ENCODE measurements at regions of chr2 and their contacts with region 1.

Region 1: DNA sequence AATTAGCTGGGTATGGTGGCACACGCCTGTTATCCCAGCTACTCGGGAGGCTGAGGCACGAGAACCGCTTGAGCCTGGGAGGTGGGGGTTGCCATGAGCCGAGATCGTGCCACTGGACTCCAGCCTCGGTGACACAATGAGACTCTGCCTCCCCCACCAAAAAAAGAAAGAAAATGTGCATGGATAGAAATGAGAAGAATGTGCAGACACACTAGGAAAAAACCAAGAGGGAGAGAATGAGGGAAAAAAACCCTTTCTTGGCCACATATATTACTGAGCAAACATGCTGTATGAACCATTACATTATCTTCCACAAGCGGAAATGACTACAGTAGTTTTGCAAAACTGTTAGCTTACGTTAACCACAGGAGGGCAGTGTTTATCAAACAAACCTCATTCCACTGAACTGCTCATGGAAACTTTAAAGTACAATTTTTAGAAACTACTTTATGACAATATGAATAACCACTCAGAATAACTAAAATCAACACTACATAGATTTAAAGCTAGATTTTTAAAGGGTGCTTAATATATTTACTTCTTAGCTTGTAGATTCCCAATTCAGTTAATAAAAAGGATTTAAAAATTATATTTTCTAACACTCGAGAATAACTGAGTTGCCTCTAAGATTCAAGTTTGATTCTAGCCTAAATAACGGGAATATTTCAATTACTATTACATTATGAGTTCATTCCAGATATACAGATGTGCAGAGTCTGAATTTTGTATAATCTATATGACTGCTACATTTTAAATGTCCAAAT is 26.4 kb downstream of the ASXL2 start:
- DNase-seq: peak; percentile 50
- ATAC-seq: peak; percentile 91
- H3K4me3 Mint-ChIP-seq: peak overlapping the region; percentile 71
- H3K27ac Mint-ChIP-seq: peak overlapping the region; percentile 90
- H3K4me1 Mint-ChIP-seq: peaks cover 39% of the 10 kb centered on the region
- H3K27me3 Mint-ChIP-seq: no peaks in the 10 kb centered on the region

Region 2: DNA sequence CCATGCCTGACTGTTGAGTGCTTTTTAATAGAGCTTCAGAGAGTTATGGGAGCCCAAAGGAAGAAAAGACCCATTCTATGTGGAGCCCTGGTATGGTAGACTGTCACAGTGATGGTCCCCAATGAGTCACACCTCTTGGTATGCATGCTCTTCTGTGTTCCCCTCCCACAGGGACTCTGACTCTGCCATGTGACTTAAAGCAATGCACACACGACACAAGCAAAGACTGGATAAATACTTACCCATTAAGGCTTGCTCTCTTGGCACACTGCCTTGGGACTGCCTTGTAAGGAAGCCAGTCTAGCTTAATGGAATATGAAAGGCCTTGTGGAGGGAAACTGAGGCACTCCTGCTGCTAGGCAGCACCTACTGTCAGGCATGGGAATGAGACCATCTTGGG is 161.9 kb before region 1 on chr2:
- CTCF ChIA-PET with region 1: no interaction called
- DNase-seq: no peak
- ATAC-seq: no peak
- H3K4me3 Mint-ChIP-seq: no peak overlapping the region
- H3K27ac Mint-ChIP-seq: no peak overlapping the region
- H3K4me1 Mint-ChIP-seq: no peaks in the 10 kb centered on the region
- H3K27me3 Mint-ChIP-seq: no peaks in the 10 kb centered on the region

Region 3: GRCh38 chr2:25838152-25838756 is 13.7 kb before region 1 on chr2:
- CTCF ChIA-PET with region 1: interaction called, 16 read pairs
- DNase-seq: no peak
- ATAC-seq: no peak
- H3K4me3 Mint-ChIP-seq: no peak overlapping the region
- H3K27ac Mint-ChIP-seq: no peak overlapping the region
- H3K4me1 Mint-ChIP-seq: peaks cover 21% of the 10 kb centered on the region
- H3K27me3 Mint-ChIP-seq: no peaks in the 10 kb centered on the region

Region 4: GRCh38 chr2:25878361-25879132 is 26.6 kb after region 1 on chr2 and contains the start of gene ASXL2:
- CTCF ChIA-PET with region 1: interaction called, 16 read pairs
- DNase-seq: peak; percentile 98
- ATAC-seq: peak; percentile 90
- H3K4me3 Mint-ChIP-seq: peak within 1 kb of the TSS; percentile 98
- H3K27ac Mint-ChIP-seq: peak within 1 kb of the TSS; percentile 98
- H3K4me1 Mint-ChIP-seq: peaks cover 41% of the 10 kb centered on the region
- H3K27me3 Mint-ChIP-seq: no peaks in the 10 kb centered on the region
- total RNA-seq, gene ASXL2: 56.1 to 62.0 TPM

Region 5: GRCh38 chr2:25951071-25951547 is 99.2 kb after region 1 on chr2:
- CTCF ChIA-PET with region 1: interaction called, 11 read pairs
- DNase-seq: peak; percentile 79
- ATAC-seq: peak; percentile 95
- H3K4me3 Mint-ChIP-seq: no peak overlapping the region
- H3K27ac Mint-ChIP-seq: no peak overlapping the region
- H3K4me1 Mint-ChIP-seq: peaks cover 6% of the 10 kb centered on the region
- H3K27me3 Mint-ChIP-seq: no peaks in the 10 kb centered on the region

Region 6: DNA sequence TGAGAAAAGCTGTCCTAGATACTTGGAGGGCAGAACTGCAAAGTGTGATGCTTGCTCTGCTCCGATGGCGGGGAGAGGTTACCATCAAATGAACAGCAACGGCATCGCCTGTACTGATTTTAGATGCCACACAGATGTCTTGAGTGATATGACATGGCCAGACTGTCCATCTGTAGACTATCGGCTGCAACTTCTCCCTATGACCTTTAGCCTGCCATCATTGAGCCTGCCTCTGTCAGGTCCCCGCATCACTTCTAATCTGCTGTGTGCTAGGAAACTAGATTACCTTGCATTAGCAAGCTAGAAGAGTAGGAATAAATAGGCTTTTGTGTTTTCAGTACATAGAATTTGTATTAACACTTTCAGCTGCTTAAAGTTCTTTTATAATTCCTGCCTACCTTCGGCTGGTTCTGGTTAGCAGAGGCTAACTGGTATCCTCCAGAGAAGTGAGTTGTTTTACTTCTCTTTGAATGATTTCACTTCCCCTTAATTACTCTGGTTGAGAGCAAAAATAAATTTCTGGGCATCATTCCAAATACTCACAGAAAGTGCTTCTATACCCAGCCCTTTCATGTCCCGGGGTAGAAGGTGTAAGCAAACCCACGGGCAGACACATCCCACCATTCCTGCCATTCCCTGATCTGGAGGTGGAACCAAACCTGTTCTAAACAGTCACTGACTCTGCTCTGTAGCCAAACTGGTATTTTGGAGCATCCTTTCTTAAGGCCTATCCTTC is 344.9 kb after region 1 on chr2:
- CTCF ChIA-PET with region 1: no interaction called
- DNase-seq: no peak
- ATAC-seq: no peak
- H3K4me3 Mint-ChIP-seq: no peak overlapping the region
- H3K27ac Mint-ChIP-seq: no peak overlapping the region
- H3K4me1 Mint-ChIP-seq: no peaks in the 10 kb centered on the region
- H3K27me3 Mint-ChIP-seq: no peaks in the 10 kb centered on the region